Naive thymus-derived CD4-positive, alpha-beta T cell (primary cell): ENCODE measurements at regions of chr19 and their contacts with region 1.

Region 1: GRCh38 chr19:38729653-38730469 is 14.4 kb downstream of the CAPN12 start:
- DNase-seq: peak; percentile 58 to 83 (median 73)
- ATAC-seq: peak; percentile 78
- H3K4me3 ChIP-seq: no peak overlapping the region
- H3K4me3 Mint-ChIP-seq: no peak overlapping the region
- H3K27ac ChIP-seq: no peak overlapping the region
- H3K27ac Mint-ChIP-seq: peak overlapping the region in 3 of 9 donors; percentile 23 to 48 (median 30)
- H3K4me1 ChIP-seq: peaks cover 9 to 10% of the 10 kb centered on the region in 2 donors
- H3K4me1 Mint-ChIP-seq: peaks cover 5 to 39% (median 13%) of the 10 kb centered on the region in 7 donors
- H3K27me3 ChIP-seq: no peaks in the 10 kb centered on the region
- H3K27me3 Mint-ChIP-seq: no peaks in the 10 kb centered on the region

Region 2: GRCh38 chr19:38544034-38544958 is 185.6 kb before region 1 on chr19:
- CTCF ChIA-PET with region 1: no interaction called
- POLR2A ChIA-PET with region 1: no interaction called
- intact Hi-C with region 1: loop called in 1 of 2 experiments (anchors 5 kb)
- DNase-seq: peak in 8 of 9 donors; percentile 36 to 68 (median 53)
- ATAC-seq: peak; percentile 88
- H3K4me3 ChIP-seq: no peak overlapping the region
- H3K4me3 Mint-ChIP-seq: peak overlapping the region in 7 of 10 donors; percentile 0 to 65 (median 45)
- H3K27ac ChIP-seq: no peak overlapping the region
- H3K27ac Mint-ChIP-seq: peak overlapping the region in 7 of 9 donors; percentile 1 to 85 (median 13)
- H3K4me1 ChIP-seq: peaks cover 4 to 14% of the 10 kb centered on the region in 2 donors
- H3K4me1 Mint-ChIP-seq: peaks cover 9 to 34% (median 19%) of the 10 kb centered on the region in 7 donors
- H3K27me3 ChIP-seq: no peaks in the 10 kb centered on the region
- H3K27me3 Mint-ChIP-seq: no peaks in the 10 kb centered on the region

Region 3: DNA sequence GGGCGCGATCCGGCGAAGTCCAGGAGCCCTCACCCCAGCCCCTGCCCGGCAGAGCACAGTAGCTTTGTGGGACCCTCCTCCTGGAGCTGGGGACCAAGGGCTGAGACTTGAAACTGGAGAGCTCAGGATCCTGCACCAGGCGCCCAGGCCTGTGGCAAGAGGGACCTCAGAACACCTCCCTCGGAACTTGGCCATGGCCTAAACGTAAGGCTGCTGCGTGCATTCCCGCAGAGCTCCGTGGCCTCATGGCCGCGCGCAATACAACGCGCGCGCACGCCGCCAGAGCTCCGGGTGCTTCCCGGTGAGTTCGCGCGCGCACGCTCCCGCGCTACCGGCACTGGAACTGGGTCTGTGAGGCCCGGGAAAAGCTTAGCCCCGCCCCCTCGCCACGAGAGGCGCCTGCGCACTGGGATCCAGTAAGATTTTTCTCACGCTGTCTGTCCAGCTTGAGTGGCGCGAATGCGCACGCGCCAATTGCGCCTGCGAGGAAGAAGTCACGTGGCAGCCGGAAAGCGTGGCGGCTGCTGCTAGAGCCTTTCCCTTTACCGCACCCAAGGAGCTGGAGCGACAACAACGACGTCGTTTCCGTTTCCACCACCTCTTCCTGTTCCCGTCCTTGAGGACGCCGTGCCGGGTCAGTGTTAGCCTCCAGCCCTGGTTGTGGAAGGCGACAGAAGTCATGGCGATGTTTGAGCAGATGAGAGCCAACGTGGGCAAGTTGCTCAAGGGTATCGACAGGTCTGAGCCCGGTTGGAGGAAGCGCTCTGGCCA is 111.1 kb before region 1 on chr19 and contains the start of gene EIF3K:
- CTCF ChIA-PET with region 1: no interaction called
- POLR2A ChIA-PET with region 1: no interaction called
- intact Hi-C with region 1: no loop called
- DNase-seq: peak; percentile 94 to 99 (median 96)
- ATAC-seq: peak; percentile 86
- H3K4me3 ChIP-seq: peak within 1 kb of the TSS; percentile 96
- H3K4me3 Mint-ChIP-seq: peak within 1 kb of the TSS; percentile 95 to 100 (median 98)
- H3K27ac ChIP-seq: peak within 1 kb of the TSS; percentile 99
- H3K27ac Mint-ChIP-seq: peak within 1 kb of the TSS; percentile 89 to 100 (median 97)
- H3K4me1 ChIP-seq: peaks cover 33 to 40% of the 10 kb centered on the region in 2 donors
- H3K4me1 Mint-ChIP-seq: peaks cover 38 to 61% (median 44%) of the 10 kb centered on the region in 7 donors
- H3K27me3 ChIP-seq: no peaks in the 10 kb centered on the region
- H3K27me3 Mint-ChIP-seq: no peaks in the 10 kb centered on the region
- total RNA-seq, gene EIF3K: 294 to 405 (median 337) TPM

Region 4: GRCh38 chr19:38949580-38950367 is 219.9 kb after region 1 on chr19:
- CTCF ChIA-PET with region 1: no interaction called
- POLR2A ChIA-PET with region 1: no interaction called
- intact Hi-C with region 1: loop called in 1 of 2 experiments (anchors 5 kb)
- DNase-seq: peak; percentile 49 to 88 (median 70)
- ATAC-seq: peak; percentile 98
- H3K4me3 ChIP-seq: peak overlapping the region; percentile 39
- H3K4me3 Mint-ChIP-seq: peak overlapping the region; percentile 52 to 82 (median 72)
- H3K27ac ChIP-seq: no peak overlapping the region
- H3K27ac Mint-ChIP-seq: peak overlapping the region in 3 of 9 donors; percentile 20 to 64 (median 61)
- H3K4me1 ChIP-seq: peaks cover 0 to 4% of the 10 kb centered on the region in 2 donors
- H3K4me1 Mint-ChIP-seq: peaks cover 10 to 18% (median 16%) of the 10 kb centered on the region in 7 donors
- H3K27me3 ChIP-seq: no peaks in the 10 kb centered on the region
- H3K27me3 Mint-ChIP-seq: peaks cover 14 to 29% (median 15%) of the 10 kb centered on the region in 5 donors